Calu3 (cell line): ENCODE measurements at regions of chr3 and their contacts with region 1.

Region 1: DNA sequence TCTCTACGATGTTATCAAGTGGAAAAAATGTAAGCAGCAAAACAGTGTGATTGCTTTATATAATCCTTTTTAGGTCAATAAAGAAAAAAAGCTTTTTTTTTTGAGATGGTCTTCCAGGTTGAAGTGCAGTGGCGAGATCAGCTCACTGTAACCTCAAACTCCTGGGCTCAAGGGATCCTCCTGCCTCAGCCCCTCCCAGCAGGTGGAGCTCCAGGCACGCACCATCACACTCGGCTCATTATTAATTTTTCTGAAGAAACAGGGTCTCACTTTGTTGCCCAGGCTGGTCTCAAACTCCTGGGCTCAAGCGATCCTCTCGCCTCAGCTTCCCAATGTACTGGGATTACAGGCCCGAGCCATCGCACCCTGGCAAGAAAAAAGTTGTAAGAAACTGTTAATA is 17.3 kb downstream of the RNF168 start:
- DNase-seq: peak; percentile 40
- H3K4me3 Mint-ChIP-seq: no peak overlapping the region
- H3K27ac Mint-ChIP-seq: no peak overlapping the region
- H3K4me1 Mint-ChIP-seq: no peaks in the 10 kb centered on the region
- H3K27me3 Mint-ChIP-seq: no peaks in the 10 kb centered on the region
- CTCF ChIP-seq: no peak

Region 2: GRCh38 chr3:196502775-196503195 is 16.5 kb after region 1 on chr3:
- CTCF ChIA-PET with region 1: interaction called, 4 read pairs
- intact Hi-C with region 1: loop called (anchors 2 kb)
- DNase-seq: peak; percentile 19
- H3K4me3 Mint-ChIP-seq: peak overlapping the region; percentile 98
- H3K27ac Mint-ChIP-seq: peak overlapping the region; percentile 99
- H3K4me1 Mint-ChIP-seq: peaks cover 18% of the 10 kb centered on the region
- H3K27me3 Mint-ChIP-seq: no peaks in the 10 kb centered on the region
- CTCF ChIP-seq: no peak